Right ventricle myocardium inferior (tissue), 1 donor: ENCODE measurements at regions of chr6 and their contacts with region 1.

Region 1: DNA sequence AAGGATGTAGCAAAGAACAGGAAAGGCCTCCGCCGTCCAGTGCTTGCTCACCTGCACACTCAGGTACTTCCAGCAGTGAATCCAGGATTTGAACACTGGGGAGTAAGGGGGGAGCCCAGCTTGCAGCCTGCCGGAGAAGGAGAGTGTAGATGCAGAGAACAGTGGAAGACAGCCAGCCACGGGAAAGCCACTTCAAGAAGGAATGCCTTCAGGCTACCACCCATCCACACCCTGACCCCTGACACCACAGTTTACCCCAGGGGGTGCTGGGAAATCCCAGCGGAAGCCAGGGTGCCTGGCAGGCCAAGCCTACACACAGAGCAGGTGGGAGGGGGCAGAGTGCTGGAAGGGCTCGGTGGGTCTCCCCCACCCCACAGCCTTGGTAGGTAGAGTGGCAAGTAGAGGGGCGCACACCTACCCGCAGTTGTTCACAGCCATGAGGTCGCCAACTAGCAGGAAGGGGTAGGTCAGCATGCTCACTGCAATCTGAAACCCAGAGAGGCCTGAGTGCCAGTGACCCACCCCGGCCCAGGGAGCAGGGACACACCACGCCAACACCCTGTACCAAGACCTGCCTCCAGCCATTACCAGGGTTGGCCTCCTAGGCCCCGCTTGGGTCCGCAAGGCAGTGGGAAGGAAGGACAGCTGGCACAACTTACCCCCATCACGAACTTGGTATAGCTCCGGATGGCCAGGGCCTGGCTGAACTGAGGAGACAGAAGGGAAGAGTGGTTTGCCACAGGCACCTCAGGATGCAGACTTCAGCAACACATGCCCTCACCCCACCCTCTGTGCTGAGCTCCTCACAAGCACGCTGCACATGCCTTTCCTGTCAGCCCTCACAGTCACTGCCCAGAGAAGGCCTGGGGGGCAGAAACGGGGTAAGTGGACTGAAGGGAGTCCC is 15.7 kb downstream of the PI16 start:
- DNase-seq: no peak
- ATAC-seq: no peak

Region 2: DNA sequence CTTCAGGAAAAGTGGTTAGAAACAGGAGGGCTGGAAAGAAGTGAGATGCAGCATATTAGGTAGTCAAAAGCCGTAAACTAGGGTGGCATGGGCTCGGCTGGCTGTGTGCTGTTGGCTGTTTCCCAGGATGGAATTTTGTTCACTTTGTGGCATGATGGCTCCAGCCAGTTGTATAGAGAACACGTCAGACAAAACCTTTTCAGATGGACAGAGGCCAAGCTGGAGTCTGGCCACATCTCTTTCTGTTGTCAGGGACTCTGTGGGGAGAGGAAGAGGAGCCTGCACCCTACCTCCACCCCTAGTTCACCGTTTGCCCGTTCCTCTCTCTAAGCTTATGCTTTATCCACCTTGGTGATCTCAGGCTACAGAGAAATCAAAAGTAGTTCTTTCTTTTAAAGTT is 62.5 kb before region 1 on chr6:
- intact Hi-C with region 1: loop called (anchors 5 kb)
- DNase-seq: peak; percentile 74
- ATAC-seq: peak; percentile 86